ENCODE measurements at regions of chr1 and their contacts with region 1.

Region 1: GRCh38 chr1:151156515-151156819 is at the start of gene TNFAIP8L2:
- DNase-seq: peak in 1 of 10 donors; percentile 31
- H3K4me3 ChIP-seq: peak within 1 kb of the TSS in 44 of 59 donors; percentile 0 to 58 (median 30)
- H3K27ac ChIP-seq: peak within 1 kb of the TSS in 34 of 59 donors; percentile 1 to 61 (median 40)
- H3K27me3 ChIP-seq: no peaks in the 10 kb centered on the region
- CTCF ChIP-seq: no peak
- total RNA-seq, gene TNFAIP8L2: 0.40 to 6.4 (median 1.9) TPM in 116 of 120 experiments, not detected in the others

Region 2: DNA sequence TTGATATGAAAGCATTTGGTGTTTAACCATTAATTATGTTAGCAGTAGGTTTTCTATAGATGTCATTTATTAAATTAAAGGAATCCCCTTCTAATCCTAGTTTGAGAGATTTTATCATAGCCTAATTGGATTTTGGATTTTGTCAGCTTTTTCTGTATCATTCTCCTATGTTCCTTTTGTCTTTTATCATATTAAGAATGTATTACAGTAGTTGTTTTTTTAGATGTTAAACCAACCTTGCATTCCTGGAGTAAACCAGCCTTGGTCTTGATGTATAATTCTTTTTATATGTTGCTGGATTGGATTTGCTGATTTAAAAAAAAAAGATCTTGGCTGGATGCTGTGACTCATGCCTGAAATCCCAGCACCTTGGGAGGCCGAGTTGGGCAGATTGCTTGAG is 224.7 kb before region 1 on chr1:
- intact Hi-C with region 1: no loop called
- DNase-seq: no peak
- H3K4me3 ChIP-seq: no peak overlapping the region
- H3K27ac ChIP-seq: no peak overlapping the region
- H3K27me3 ChIP-seq: no peaks in the 10 kb centered on the region
- CTCF ChIP-seq: no peak

Region 3: GRCh38 chr1:151024540-151025146 is 131.8 kb before region 1 on chr1:
- intact Hi-C with region 1: loop called in 1 of 2 experiments (anchors 5 kb)
- DNase-seq: peak; percentile 63 to 86 (median 78)
- H3K4me3 ChIP-seq: no peak overlapping the region
- H3K27ac ChIP-seq: peak overlapping the region in 42 of 59 donors; percentile 5 to 83 (median 48)
- H3K27me3 ChIP-seq: no peaks in the 10 kb centered on the region
- CTCF ChIP-seq: peak; percentile 40 to 88 (median 75)

Region 4: DNA sequence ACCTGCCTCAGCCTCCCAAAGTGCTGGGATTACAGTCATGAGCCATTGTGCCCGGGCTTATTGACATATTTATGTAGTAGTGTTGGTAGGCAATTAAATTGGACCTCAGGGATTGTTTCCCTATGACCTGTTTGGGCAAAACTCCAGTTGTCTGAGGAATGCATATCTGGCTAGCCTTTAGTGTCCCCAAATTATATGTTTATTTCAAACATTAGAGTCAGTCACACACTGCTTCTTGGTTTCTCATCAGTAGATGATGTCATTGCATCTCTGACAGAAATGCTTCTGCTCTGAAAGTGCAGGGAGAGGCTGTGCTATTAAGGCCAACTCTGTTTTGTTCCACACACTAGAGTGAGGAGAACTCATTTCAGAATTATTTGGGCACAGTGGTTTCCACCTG is 54.4 kb after region 1 on chr1:
- intact Hi-C with region 1: no loop called
- DNase-seq: no peak
- H3K4me3 ChIP-seq: no peak overlapping the region
- H3K27ac ChIP-seq: peak overlapping the region in 7 of 59 donors; percentile 1 to 57 (median 28)
- H3K27me3 ChIP-seq: no peaks in the 10 kb centered on the region
- CTCF ChIP-seq: no peak

Measured in dorsolateral prefrontal cortex (tissue), 120 donors.